Sigmoid colon (tissue), 7 donors: ENCODE measurements at regions of chr20 and their contacts with region 1.

Region 1: GRCh38 chr20:62182613-62183425 is at the start of gene MTG2:
- DNase-seq: peak; percentile 97
- H3K4me3 ChIP-seq: peak within 1 kb of the TSS; percentile 61 to 92 (median 84)
- H3K27ac ChIP-seq: peak within 1 kb of the TSS; percentile 91 to 96 (median 94)
- H3K4me1 ChIP-seq: peaks cover 0 to 25% (median 19%) of the 10 kb centered on the region in 4 donors
- H3K27me3 ChIP-seq: no peaks in the 10 kb centered on the region
- CTCF ChIP-seq: no peak
- EP300 ChIP-seq: peak in 1 of 4 donors; percentile 51
- POLR2A ChIP-seq: peak; percentile 83 to 87
- total RNA-seq, gene MTG2: 13.3 to 28.1 (median 21.2) TPM

Region 2: DNA sequence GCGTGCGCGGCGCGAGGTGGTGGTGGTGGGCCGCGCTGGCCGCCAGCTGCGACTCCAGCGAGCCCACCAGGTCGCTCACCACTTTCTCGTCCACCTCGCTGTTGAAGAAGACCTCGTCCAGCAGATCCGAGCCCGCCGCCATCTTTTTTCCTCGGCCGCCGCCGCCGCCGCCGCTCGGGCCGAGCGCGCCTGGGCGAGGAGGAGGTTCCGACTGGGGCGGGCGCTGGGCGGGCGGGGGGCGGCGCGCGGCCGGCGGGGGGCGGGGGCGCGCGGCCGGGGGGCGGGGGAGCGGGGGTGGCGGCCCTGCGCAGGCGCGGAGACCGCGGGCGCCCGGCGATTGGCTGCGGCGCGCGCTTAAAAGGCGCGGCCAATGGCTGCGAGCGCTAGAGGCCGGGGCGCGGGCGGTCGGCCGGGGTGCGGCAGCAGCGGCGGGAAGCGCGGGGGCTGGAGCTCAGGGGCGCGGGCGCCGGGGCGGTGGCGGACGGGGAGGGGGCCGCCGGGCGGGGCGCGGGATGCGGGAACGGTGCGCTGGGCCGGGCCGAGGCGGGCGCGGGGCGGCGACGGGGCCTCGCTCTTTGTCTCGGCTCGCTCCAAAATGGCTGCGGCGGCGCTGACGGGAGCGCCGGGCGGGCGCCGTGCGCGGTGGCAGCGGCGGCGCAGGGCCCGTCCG is 117.0 kb before region 1 on chr20 and contains the start of gene TAF4:
- intact Hi-C with region 1: loop called (anchors 5 kb)
- DNase-seq: peak; percentile 87
- H3K4me3 ChIP-seq: peak within 1 kb of the TSS; percentile 51 to 73 (median 72)
- H3K27ac ChIP-seq: peak within 1 kb of the TSS; percentile 85 to 91 (median 88)
- H3K4me1 ChIP-seq: peaks cover 0 to 59% (median 49%) of the 10 kb centered on the region in 4 donors
- H3K27me3 ChIP-seq: no peaks in the 10 kb centered on the region
- CTCF ChIP-seq: no peak
- EP300 ChIP-seq: no peak
- POLR2A ChIP-seq: no peak
- total RNA-seq, gene TAF4: 8.0 to 13.3 (median 10.9) TPM

Region 3: DNA sequence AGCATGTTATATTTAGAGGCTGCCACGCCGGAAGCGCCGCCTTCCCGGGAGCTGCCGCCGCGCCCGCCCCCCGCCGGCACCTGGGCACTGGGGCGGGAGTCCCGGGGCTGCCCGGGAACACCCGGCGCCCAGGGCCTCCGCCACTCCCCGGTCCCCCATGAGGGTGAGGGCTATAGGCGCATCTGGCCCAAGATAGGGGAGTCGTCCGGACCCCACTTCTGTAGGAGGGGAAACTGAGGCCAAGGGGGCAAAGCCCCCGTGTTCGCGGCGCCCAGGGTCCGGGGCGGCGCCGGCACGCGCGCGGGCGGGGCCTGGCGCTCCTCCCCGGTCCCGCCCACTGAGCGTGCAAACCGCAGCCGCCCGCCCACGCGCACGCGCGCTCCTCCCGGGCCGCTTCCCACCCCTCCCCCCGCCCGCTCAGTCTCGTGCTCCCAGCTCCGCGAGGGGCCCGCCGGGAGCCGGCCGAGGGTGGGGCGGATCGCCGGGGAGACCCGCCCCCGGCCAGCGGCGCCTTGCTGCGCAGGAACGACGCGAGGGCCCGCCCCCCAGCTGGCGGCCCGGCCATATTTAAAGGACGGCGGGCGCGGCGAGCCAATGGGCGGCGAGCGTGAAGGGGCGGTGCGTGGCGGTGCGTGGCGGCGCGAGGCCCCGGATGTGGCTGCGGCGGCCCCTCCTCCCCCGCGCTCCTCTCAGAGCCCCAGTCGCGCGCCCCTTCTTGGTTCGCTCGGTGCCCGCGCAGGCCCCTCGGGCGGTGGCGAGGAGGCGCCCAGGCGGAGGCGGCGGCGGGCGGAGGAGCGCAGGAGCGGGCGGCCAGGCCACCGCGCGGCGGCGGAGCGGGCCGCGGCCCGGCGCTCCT is 60.8 kb before region 1 on chr20 and contains the start of gene LSM14B:
- intact Hi-C with region 1: loop called (anchors 5 kb)
- DNase-seq: peak; percentile 98
- H3K4me3 ChIP-seq: peak within 1 kb of the TSS; percentile 76 to 89 (median 87)
- H3K27ac ChIP-seq: peak within 1 kb of the TSS; percentile 91 to 98 (median 97)
- H3K4me1 ChIP-seq: peaks cover 0 to 23% (median 21%) of the 10 kb centered on the region in 4 donors
- H3K27me3 ChIP-seq: peaks cover 0 to 19% (median 0%) of the 10 kb centered on the region in 3 donors
- CTCF ChIP-seq: no peak
- EP300 ChIP-seq: peak in 1 of 4 donors; percentile 25
- POLR2A ChIP-seq: no peak
- total RNA-seq, gene LSM14B: 20.8 to 28.5 (median 23.6) TPM

Region 4: DNA sequence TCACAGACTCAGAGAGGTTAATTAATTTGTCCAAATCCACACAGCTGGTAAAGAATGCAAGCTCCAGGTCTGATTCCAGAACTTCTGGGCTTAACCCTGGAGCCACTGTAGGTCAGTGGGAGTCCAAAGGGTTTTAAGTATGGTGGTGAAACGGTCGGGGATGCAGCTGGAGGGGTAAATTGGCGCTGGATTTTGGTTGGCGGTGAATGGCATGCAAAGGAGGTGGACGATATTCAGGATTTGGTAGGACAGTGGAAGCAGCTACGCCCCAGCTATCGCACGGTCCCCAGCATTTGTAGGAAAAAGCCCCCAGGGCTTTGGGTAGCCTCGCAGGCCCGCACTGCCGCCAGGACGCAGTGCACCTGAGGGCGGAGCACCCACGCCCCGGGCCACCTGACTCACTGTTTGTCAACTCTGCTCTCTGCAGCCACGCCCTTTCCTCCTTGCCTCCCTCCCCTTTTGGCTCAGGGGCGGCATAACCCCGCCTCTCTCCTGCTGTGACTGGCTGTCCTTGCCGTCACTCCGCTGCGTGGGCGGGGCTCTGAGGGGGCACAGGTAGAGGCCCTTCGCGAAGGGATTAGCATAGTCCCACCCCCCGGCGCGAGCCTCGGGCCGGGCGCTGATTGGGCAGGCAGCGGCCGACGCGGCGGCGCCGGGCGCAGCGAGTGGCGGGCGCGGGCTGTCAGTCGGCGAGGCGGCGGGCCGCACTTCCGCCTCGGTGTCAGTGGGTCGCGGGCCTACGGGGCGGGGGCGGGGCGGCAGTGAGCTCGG is 55.2 kb after region 1 on chr20 and contains the start of gene OSBPL2:
- intact Hi-C with region 1: loop called (anchors 1 kb)
- DNase-seq: peak; percentile 100
- H3K4me3 ChIP-seq: peak within 1 kb of the TSS; percentile 62 to 96 (median 94)
- H3K27ac ChIP-seq: peak within 1 kb of the TSS; percentile 81 to 87 (median 85)
- H3K4me1 ChIP-seq: peaks cover 0 to 21% (median 20%) of the 10 kb centered on the region in 4 donors
- H3K27me3 ChIP-seq: peaks cover 0 to 9% (median 5%) of the 10 kb centered on the region in 3 donors
- CTCF ChIP-seq: no peak
- EP300 ChIP-seq: no peak
- POLR2A ChIP-seq: no peak
- total RNA-seq, gene OSBPL2: 31.6 to 36.8 (median 32.6) TPM

Region 5: DNA sequence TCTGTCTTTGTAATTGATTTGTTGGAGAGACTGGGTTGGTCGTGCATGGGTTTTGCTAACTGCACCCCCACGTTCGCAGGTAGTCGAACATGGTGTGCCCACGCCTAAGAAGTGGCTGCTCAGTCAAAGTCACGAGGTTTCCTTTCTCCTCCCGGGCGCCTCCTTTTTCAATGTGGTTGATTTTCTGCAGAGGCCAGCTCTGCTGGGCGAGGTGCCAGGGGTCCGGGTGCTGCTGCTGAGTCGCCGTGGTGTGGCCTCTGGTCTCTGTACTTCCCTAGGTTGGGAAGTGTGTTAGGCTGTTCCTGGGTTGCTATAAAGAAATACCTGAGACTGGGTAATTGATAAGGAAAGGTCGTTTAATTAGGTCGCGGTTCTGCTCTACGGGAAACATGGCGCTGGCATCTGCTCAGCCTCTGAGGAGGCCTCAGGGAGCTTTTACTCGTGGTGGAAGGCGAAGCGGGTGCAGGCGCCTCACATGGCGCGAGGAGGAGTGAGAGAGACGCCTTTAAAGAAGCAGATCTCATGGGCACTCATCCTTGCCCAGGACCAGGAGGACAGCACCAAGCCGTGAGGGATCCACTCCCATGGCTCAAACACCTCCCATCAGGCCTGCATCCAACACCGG is 69.6 kb after region 1 on chr20:
- intact Hi-C with region 1: no loop called
- DNase-seq: no peak
- H3K4me3 ChIP-seq: no peak overlapping the region
- H3K27ac ChIP-seq: no peak overlapping the region
- H3K4me1 ChIP-seq: no peaks in the 10 kb centered on the region
- H3K27me3 ChIP-seq: no peaks in the 10 kb centered on the region
- CTCF ChIP-seq: no peak
- EP300 ChIP-seq: no peak
- POLR2A ChIP-seq: no peak

Region 6: GRCh38 chr20:62266340-62266739 is 83.5 kb after region 1 on chr20:
- intact Hi-C with region 1: no loop called
- DNase-seq: no peak
- H3K4me3 ChIP-seq: no peak overlapping the region
- H3K27ac ChIP-seq: no peak overlapping the region
- H3K4me1 ChIP-seq: no peaks in the 10 kb centered on the region
- H3K27me3 ChIP-seq: no peaks in the 10 kb centered on the region
- CTCF ChIP-seq: no peak
- EP300 ChIP-seq: no peak
- POLR2A ChIP-seq: no peak